ENCODE measurements at regions of chrX and their contacts with region 1.

Region 1: DNA sequence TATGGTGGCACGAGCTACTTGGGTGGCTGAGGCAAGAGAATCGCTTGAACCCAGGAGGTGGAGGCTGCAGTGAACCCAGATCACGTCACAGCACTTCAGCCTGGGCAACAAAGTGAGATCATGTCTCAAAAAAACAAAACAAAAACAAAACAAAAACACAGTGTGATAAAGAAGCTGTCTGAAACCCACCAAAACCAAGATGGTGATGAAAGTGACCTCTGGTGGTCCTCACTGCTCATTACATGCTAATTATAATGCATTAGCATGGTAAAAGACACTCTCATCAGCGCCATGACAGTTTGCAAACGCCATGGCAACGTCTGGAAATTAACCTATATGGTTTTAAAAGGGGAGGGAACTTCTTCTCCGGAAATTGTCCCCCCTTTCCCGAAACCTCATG is 29.4 kb upstream of the OPHN1 start:
- DNase-seq: peak in 2 of 4 donors; percentile 20 to 39
- ATAC-seq: peak; percentile 46
- H3K4me3 ChIP-seq: no peak overlapping the region
- H3K27ac ChIP-seq: no peak overlapping the region
- H3K4me1 ChIP-seq: no peaks in the 10 kb centered on the region
- H3K27me3 ChIP-seq: no peaks in the 10 kb centered on the region
- CTCF ChIP-seq: peak; percentile 40 to 45

Region 2: DNA sequence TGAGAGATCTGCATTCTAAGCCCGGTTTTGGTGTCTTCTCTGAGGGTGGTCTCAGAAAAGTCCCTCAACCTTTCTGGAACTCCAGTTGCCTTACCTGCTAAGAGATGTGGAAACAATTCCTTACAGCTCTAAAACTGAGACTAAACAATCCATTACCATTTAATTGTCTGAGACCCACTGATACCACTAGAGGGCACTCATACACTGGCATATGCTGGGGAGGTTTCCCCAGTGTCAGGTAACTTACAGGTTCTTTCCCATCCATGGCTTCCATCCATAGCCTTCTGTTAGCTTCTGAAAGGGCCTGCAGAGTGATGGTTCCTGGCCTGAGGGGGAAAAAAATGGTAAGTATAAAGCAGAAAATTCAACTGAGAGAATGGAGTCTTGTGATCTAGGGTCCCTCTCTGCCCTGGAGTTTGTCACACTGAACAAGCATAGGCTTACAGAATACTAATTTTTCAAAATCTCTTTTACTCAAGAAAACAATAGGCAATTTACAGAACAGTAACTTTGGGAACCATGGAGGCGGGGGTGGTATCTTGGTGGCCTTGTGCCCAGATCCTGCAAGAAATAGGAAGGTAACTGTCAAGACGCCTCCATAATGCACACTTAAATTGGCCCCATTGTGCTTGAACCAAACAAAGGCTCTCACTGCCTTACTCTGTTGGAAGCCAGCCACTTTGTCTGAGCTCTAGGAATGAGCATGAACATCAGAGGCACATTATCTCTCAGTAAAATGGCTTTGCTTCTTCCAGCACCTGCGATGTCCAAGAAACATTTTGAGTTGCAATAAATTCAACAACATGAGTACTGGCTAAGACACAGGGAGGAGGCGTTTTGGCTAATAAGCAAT is 265.5 kb before region 1 on chrX:
- intact Hi-C with region 1: loop called in 1 of 2 experiments (anchors 10 kb)
- DNase-seq: peak in 2 of 4 donors; percentile 27 to 40
- ATAC-seq: peak; percentile 97
- H3K4me3 ChIP-seq: no peak overlapping the region
- H3K27ac ChIP-seq: no peak overlapping the region
- H3K4me1 ChIP-seq: no peaks in the 10 kb centered on the region
- H3K27me3 ChIP-seq: no peaks in the 10 kb centered on the region
- CTCF ChIP-seq: peak; percentile 27 to 80